B cell (primary cell): ENCODE measurements at regions of chr12 and their contacts with region 1.

Region 1: DNA sequence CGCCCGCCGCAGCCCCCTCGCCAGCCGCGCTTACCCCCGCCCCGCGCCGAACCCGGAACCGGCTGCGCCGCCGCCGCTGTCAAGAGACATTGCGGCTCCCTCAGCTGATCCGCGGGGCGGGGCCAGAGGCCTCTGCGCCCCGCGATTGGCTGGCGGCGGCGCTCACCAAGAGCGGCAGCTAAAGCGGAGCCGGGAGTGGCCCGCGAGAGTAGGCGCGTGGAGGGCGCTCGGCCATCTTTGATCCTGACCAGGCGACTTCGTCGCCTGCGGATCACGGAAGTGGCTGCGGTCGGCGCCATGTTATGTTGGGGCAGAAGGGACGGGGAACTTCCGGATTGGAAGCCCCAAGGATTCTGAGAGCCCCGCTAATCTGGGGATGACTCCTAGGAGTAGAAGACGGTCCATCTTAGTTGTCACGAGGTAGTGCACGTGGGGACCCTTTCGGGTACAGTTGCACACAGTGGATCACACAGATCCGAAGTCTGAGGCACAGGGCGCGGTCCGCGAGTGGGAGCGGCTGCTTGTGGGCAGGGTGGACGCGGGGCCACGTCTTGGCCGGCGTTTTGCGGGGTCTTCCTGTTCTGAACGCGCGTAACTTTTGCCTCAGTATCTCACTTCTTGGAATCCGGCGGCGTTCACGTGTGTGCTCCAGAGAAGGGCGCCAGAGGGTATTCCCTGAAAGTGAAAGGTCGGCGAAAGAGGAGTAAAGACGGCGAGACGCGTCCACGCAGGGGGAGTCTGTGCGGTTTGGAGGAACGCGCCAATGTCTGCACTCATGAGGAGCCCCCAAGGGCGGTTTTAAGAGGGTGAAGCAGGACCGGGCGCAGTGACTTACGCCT is at the start of gene CHFR:
- DNase-seq: peak; percentile 98
- ATAC-seq: peak; percentile 98
- H3K4me3 ChIP-seq: peak within 1 kb of the TSS; percentile 69 to 90 (median 77)
- H3K4me3 Mint-ChIP-seq: peak within 1 kb of the TSS; percentile 99
- H3K27ac ChIP-seq: peak within 1 kb of the TSS; percentile 92 to 98
- H3K27ac Mint-ChIP-seq: peak within 1 kb of the TSS; percentile 100
- H3K4me1 ChIP-seq: peaks cover 11 to 16% of the 10 kb centered on the region in 2 donors
- H3K4me1 Mint-ChIP-seq: peaks cover 30% of the 10 kb centered on the region
- H3K27me3 ChIP-seq: no peaks in the 10 kb centered on the region
- H3K27me3 Mint-ChIP-seq: peaks cover 6% of the 10 kb centered on the region
- CTCF ChIP-seq: no peak
- total RNA-seq, gene CHFR: 92.5 and 105 TPM in 2 replicates

Region 2: DNA sequence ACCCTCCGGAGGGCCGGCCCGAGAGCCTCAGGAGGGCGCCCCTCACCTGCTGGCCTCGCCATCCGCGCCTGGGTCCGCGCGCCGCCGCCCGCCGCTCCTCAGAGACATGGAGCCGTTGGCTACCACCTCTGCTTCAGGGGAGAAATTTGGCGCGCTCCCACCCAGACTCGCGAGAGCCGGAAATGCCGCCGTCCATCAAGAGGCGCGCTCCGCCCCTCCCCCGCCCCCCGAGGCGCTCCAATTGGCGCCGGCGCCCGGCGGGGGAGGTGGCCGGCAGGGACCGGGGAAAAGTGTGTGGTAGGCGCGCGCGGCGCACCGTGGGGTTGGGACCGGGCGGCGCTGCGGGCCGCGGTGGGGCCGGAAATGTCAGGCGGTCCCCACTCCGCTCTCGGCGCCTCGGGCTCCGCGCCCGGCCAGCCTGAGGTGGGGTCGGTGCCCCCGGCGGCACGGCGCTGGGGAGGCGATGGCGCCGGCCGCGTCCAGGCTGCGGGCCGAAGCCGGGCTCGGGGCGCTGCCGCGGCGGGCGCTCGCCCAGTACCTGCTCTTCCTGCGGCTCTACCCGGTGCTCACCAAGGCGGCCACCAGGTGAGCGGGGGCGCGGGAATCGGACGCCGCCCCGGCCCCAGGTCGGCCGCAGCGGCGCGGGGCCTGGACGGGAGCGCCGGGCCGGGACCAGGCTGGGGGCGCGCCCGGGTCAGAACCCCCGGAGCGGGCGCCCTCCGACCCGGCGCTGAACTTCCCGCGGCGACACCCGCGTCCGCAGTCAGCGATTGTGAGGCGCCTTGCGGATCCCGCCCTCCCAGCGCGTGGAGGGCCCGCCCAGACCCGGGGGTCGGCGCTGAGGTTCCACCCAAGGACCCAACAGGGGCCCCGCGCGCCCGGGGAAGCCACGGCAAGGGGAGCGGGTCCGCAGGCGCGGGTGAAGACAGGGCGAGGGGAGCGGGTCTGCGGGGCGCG is 200.2 kb before region 1 on chr12 and contains the starts of genes POLE and PXMP2:
- CTCF ChIA-PET with region 1: no interaction called
- POLR2A ChIA-PET with region 1: no interaction called
- intact Hi-C with region 1: loop called (anchors 5 kb)
- DNase-seq: peak; percentile 96
- ATAC-seq: peak; percentile 94
- H3K4me3 ChIP-seq: peak within 1 kb of the TSS in 4 of 5 experiments; percentile 29 to 64 (median 60)
- H3K4me3 Mint-ChIP-seq: peak within 1 kb of the TSS; percentile 87
- H3K27ac ChIP-seq: peak within 1 kb of the TSS in 1 of 2 donors; percentile 56
- H3K27ac Mint-ChIP-seq: peak within 1 kb of the TSS; percentile 71
- H3K4me1 ChIP-seq: peaks cover 8 to 12% of the 10 kb centered on the region in 2 donors
- H3K4me1 Mint-ChIP-seq: peaks cover 20% of the 10 kb centered on the region
- H3K27me3 ChIP-seq: no peaks in the 10 kb centered on the region
- H3K27me3 Mint-ChIP-seq: no peaks in the 10 kb centered on the region
- CTCF ChIP-seq: no peak
- total RNA-seq, gene POLE: 62.0 and 69.1 TPM in 2 replicates
- total RNA-seq, gene PXMP2: 6.7 and 10.2 TPM in 2 replicates

Region 3: GRCh38 chr12:132761032-132761920 is 126.5 kb before region 1 on chr12 and contains the start of gene ANKLE2:
- CTCF ChIA-PET with region 1: no interaction called
- POLR2A ChIA-PET with region 1: no interaction called
- intact Hi-C with region 1: loop called (anchors 2 kb)
- DNase-seq: peak; percentile 67
- ATAC-seq: peak; percentile 58
- H3K4me3 ChIP-seq: peak within 1 kb of the TSS; percentile 71 to 96 (median 80)
- H3K4me3 Mint-ChIP-seq: peak within 1 kb of the TSS; percentile 93
- H3K27ac ChIP-seq: peak within 1 kb of the TSS; percentile 89 to 91
- H3K27ac Mint-ChIP-seq: peak within 1 kb of the TSS; percentile 94
- H3K4me1 ChIP-seq: peaks cover 22 to 34% of the 10 kb centered on the region in 2 donors
- H3K4me1 Mint-ChIP-seq: peaks cover 49% of the 10 kb centered on the region
- H3K27me3 ChIP-seq: no peaks in the 10 kb centered on the region
- H3K27me3 Mint-ChIP-seq: no peaks in the 10 kb centered on the region
- CTCF ChIP-seq: no peak
- total RNA-seq, gene ANKLE2: 148 and 158 TPM in 2 replicates

Region 4: DNA sequence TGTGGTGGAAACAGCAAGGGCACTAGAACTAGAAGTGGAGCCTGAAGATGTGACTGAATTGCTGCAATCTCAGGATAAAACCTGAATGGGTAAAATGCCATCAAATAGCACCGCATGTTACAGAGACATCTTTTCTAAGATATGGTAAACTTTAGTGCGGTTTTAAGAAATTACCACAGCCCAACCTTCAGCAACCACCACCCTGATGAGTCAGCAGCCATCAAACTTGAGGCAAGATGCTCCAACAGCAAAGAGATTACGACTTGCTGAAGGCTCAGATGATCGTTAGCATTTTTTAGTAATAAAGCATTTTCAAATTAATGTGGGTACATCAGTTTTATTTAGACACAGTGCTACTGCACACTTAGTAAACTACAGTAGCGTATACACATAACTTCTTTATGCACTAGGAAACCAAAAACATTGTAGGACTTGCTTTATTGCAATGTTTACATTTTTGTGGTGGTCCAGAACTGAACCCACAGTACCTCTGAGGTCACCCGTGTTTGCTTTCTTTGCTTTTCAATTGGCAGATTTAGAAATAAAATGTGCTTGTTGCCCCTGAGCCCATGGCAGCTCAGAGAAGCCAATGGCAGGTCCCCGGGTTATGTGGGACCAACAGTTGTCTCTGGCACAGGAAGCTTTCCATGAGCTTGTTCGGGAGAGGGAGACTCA is 75.0 kb before region 1 on chr12:
- CTCF ChIA-PET with region 1: no interaction called
- POLR2A ChIA-PET with region 1: no interaction called
- intact Hi-C with region 1: no loop called
- DNase-seq: no peak
- ATAC-seq: no peak
- H3K4me3 ChIP-seq: no peak overlapping the region
- H3K4me3 Mint-ChIP-seq: no peak overlapping the region
- H3K27ac ChIP-seq: peak overlapping the region; percentile 10 to 38
- H3K27ac Mint-ChIP-seq: no peak overlapping the region
- H3K4me1 ChIP-seq: peaks cover 0 to 7% of the 10 kb centered on the region in 2 donors
- H3K4me1 Mint-ChIP-seq: peaks cover 12% of the 10 kb centered on the region
- H3K27me3 ChIP-seq: no peaks in the 10 kb centered on the region
- H3K27me3 Mint-ChIP-seq: no peaks in the 10 kb centered on the region
- CTCF ChIP-seq: no peak

Region 5: DNA sequence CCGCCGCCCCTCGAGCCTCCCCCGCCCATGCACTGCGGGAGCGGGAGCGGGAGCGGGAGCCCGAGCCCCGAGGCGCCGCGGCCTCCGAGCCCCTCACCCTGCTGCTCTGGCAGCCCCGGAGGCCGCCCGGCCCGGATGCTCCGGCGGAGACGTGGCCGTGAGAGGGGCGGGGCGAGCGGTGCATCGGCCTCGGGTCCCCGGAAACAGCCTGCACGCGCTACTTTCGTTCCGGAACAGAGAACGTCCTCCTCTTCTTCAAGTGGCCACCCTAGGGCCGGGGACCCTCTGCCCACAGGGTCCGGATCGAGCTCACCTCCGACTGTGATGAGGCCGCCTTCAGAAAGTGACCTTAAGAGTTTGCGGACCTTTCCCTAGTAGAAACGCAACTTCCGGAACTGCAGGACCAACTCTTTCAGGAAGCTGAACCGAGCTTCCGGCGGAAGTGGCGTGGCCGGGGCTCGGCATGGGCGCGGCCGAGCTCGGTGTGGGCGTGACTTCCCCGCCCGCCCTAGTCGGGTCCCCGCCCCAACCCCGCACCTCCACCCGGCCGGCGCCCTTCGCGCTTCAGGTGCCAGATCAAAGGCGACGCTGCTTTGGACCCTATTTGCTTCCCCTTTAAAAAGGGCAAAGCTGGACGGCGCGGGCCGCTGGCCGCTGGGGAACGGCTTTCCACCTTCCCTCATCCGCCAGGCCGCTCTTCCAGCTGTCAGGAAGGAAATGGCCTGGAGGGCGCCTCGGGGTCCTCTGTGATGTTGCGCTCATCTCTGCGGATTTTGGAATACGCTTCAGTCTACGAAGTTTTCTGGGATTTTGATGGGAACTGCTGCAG is 58.8 kb before region 1 on chr12 and contains the start of gene GOLGA3:
- CTCF ChIA-PET with region 1: no interaction called
- POLR2A ChIA-PET with region 1: interaction called, 6 read pairs
- intact Hi-C with region 1: loop called (anchors 1 kb)
- DNase-seq: peak; percentile 97
- ATAC-seq: peak; percentile 94
- H3K4me3 ChIP-seq: peak within 1 kb of the TSS; percentile 81 to 90 (median 85)
- H3K4me3 Mint-ChIP-seq: peak within 1 kb of the TSS; percentile 96
- H3K27ac ChIP-seq: peak within 1 kb of the TSS; percentile 99
- H3K27ac Mint-ChIP-seq: peak within 1 kb of the TSS; percentile 100
- H3K4me1 ChIP-seq: peaks cover 27 to 29% of the 10 kb centered on the region in 2 donors
- H3K4me1 Mint-ChIP-seq: peaks cover 42% of the 10 kb centered on the region
- H3K27me3 ChIP-seq: no peaks in the 10 kb centered on the region
- H3K27me3 Mint-ChIP-seq: no peaks in the 10 kb centered on the region
- CTCF ChIP-seq: no peak
- total RNA-seq, gene GOLGA3: 66.0 and 68.9 TPM in 2 replicates

Region 6: GRCh38 chr12:132986001-132986912 is 98.5 kb after region 1 on chr12 and contains the start of gene ZNF26:
- CTCF ChIA-PET with region 1: no interaction called
- POLR2A ChIA-PET with region 1: interaction called, 6 read pairs
- intact Hi-C with region 1: loop called (anchors 1 kb)
- DNase-seq: peak; percentile 94
- ATAC-seq: peak; percentile 92
- H3K4me3 ChIP-seq: peak within 1 kb of the TSS; percentile 72 to 95 (median 89)
- H3K4me3 Mint-ChIP-seq: peak within 1 kb of the TSS; percentile 95
- H3K27ac ChIP-seq: peak within 1 kb of the TSS; percentile 75 to 83
- H3K27ac Mint-ChIP-seq: peak within 1 kb of the TSS; percentile 96
- H3K4me1 ChIP-seq: peaks cover 14 to 22% of the 10 kb centered on the region in 2 donors
- H3K4me1 Mint-ChIP-seq: peaks cover 27% of the 10 kb centered on the region
- H3K27me3 ChIP-seq: no peaks in the 10 kb centered on the region
- H3K27me3 Mint-ChIP-seq: no peaks in the 10 kb centered on the region
- CTCF ChIP-seq: no peak
- total RNA-seq, gene ZNF26: 36.0 and 41.5 TPM in 2 replicates

Region 7: DNA sequence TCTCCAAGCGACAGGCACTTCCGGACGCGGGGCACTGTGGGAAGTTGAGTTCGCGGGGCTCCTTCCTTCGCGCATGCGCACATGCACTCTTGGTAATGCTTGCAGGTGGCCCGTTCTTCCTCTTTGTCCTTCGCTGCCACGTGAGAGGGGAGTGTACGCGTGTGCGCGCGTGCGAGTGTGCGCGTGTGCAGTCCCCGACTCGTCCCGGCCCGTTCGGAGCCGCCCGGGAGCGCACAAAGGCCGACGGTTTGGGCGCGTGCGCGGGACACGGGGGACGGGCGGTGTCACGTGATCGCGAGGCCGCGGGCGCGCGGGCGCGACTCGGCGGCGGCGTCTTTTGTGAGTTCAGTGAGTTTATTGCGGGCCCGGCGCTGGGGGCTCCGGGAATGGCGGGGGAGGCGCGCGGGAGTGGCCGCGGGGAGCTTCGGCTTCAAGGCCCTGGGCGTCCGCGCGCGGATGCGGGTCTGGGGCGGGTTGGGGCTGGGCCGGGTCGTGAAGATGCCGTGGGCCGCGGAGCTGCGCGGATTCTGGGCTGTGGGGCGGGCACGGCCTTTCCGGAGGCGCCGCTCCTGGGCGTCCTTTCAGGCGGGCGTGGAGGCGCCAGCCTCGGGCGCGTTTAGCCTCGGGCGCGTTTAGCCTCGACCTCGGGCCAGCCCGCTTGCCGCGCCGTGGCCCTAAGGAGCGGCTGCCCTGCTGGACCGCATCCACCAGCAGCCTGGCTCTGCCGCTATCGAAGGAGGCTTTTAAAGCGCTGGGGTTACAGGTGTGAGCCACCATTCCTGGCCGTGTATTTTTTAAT is 149.7 kb after region 1 on chr12 and contains the start of gene ZNF84:
- CTCF ChIA-PET with region 1: no interaction called
- POLR2A ChIA-PET with region 1: no interaction called
- intact Hi-C with region 1: loop called (anchors 1 kb)
- DNase-seq: peak; percentile 99
- ATAC-seq: peak; percentile 95
- H3K4me3 ChIP-seq: peak within 1 kb of the TSS; percentile 51 to 82 (median 69)
- H3K4me3 Mint-ChIP-seq: peak within 1 kb of the TSS; percentile 97
- H3K27ac ChIP-seq: peak within 1 kb of the TSS; percentile 88 to 95
- H3K27ac Mint-ChIP-seq: peak within 1 kb of the TSS; percentile 99
- H3K4me1 ChIP-seq: peaks cover 7 to 10% of the 10 kb centered on the region in 2 donors
- H3K4me1 Mint-ChIP-seq: peaks cover 13% of the 10 kb centered on the region
- H3K27me3 ChIP-seq: no peaks in the 10 kb centered on the region
- H3K27me3 Mint-ChIP-seq: peaks cover 3% of the 10 kb centered on the region
- CTCF ChIP-seq: no peak
- total RNA-seq, gene ZNF84: 48.4 and 61.5 TPM in 2 replicates